ENCODE measurements at regions of chr9 and their contacts with region 1.

Region 1: DNA sequence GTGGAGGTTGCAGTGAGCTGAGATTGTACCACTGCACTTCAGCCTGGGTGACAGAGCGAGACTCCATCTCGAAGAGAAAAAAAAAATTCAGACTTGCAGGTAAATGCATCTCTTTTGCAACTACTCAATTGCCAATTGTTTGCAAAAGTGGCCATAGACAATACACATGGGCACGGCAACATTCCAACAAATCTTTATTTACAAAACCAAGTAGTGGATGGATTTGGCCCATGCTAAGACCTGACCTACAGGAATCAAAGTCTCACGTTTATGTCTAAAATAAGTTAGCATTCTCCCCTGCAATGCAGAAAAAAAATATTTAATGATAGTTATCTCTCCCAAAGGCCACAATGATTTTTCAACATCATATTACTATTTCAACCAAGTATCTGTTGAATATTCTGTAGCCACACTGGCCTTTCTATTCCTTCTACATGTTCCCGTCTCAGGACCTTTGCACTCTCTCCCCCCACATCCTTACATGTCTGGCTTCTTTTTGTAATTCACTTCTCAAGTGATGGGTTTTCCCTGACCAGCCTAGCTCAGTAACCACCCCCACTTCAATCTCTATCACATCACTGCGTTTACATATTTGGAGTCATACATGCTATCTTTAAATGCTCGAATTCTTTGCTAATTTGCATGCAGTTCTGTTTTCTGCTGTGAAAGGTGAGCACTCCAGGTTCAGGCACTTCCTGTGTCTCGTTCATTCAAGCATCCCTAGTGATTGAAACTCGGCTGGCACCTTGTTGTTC is 54.2 kb downstream of the FNBP1 start:
- DNase-seq: peak; percentile 64
- CTCF ChIP-seq: no peak

Region 2: GRCh38 chr9:129972816-129973215 is 16.0 kb before region 1 on chr9:
- CTCF ChIA-PET with region 1: no interaction called
- POLR2A ChIA-PET with region 1: no interaction called
- DNase-seq: no peak
- CTCF ChIP-seq: no peak

Region 3: DNA sequence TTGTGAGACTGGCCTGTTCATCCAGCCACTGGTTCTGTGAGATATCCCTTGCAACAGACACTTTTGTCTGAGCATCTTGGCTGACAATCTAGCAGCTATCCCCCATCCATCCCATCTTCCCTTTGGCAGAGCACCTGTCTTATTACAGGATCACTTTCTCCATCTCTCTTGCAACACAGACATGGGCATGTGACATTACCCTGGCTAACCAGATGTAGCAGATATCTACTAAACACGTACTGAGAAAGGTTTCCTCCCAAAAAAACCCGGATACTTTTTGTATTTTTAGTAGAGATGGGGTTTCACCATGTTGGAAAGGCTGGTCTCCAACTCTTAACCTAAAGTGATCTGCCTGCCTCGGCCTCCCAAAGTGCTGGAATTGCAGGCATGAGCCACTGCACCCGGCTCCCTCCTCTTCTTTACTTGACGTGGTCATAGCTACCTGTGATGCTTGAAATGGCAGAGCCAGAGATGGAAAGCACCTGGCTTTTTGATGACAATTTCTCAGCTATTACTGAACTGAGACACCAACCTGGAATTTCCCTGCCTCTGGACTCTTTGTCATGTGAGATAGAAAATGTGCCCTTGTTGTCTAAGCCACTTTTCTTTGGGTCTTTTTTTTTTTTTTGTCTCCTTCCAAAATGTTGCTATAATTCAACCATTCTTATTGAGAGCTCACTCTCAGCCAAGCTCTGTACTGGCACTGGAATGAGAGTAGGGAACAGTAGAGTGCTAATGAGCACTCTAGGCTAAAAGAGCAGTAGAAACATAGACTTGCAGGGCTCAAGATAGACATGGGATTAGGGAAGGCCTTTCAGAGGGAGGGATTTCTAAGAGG is 21.6 kb after region 1 on chr9:
- CTCF ChIA-PET with region 1: interaction called, 11 read pairs
- POLR2A ChIA-PET with region 1: interaction called, 4 read pairs
- DNase-seq: no peak
- CTCF ChIP-seq: no peak

Region 4: GRCh38 chr9:130023144-130023787 is 34.5 kb after region 1 on chr9:
- CTCF ChIA-PET with region 1: interaction called, 22 read pairs
- POLR2A ChIA-PET with region 1: interaction called, 10 read pairs
- DNase-seq: no peak
- CTCF ChIP-seq: no peak

Region 5: DNA sequence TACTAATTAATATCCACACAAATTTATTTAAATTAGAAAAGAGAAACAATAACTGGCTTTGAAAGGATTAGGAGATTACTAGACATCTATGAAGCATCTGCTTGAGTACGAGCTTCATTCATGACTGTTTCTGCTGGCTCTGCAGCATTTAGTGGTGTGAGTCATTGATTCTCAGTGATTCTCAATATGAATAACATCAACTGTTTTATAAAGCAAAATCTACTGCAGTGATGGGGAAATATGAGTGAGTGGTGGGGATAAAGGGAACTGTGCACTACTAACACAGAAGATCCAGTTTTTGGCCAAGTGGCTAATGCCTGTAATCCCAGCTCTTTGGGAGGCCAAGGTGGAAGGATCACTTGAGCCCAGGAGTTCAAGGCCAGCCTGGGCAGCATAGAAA is 45.8 kb after region 1 on chr9:
- CTCF ChIA-PET with region 1: interaction called, 4 read pairs
- POLR2A ChIA-PET with region 1: interaction called, 10 read pairs
- DNase-seq: no peak
- CTCF ChIP-seq: no peak